B cell (primary cell): ENCODE measurements at regions of chr22 and their contacts with region 1.

Region 1: GRCh38 chr22:41285820-41286638 is at the start of gene RANGAP1:
- DNase-seq: peak; percentile 99
- ATAC-seq: peak; percentile 96
- H3K4me3 ChIP-seq: peak within 1 kb of the TSS; percentile 80 to 98 (median 88)
- H3K4me3 Mint-ChIP-seq: peak within 1 kb of the TSS; percentile 100
- H3K27ac ChIP-seq: peak within 1 kb of the TSS; percentile 94 to 95
- H3K27ac Mint-ChIP-seq: peak within 1 kb of the TSS; percentile 99
- H3K4me1 ChIP-seq: peaks cover 12 to 16% of the 10 kb centered on the region in 2 donors
- H3K4me1 Mint-ChIP-seq: peaks cover 26% of the 10 kb centered on the region
- H3K27me3 ChIP-seq: no peaks in the 10 kb centered on the region
- H3K27me3 Mint-ChIP-seq: no peaks in the 10 kb centered on the region
- CTCF ChIP-seq: no peak
- total RNA-seq, gene RANGAP1: 48.4 and 48.8 TPM in 2 replicates

Region 2: DNA sequence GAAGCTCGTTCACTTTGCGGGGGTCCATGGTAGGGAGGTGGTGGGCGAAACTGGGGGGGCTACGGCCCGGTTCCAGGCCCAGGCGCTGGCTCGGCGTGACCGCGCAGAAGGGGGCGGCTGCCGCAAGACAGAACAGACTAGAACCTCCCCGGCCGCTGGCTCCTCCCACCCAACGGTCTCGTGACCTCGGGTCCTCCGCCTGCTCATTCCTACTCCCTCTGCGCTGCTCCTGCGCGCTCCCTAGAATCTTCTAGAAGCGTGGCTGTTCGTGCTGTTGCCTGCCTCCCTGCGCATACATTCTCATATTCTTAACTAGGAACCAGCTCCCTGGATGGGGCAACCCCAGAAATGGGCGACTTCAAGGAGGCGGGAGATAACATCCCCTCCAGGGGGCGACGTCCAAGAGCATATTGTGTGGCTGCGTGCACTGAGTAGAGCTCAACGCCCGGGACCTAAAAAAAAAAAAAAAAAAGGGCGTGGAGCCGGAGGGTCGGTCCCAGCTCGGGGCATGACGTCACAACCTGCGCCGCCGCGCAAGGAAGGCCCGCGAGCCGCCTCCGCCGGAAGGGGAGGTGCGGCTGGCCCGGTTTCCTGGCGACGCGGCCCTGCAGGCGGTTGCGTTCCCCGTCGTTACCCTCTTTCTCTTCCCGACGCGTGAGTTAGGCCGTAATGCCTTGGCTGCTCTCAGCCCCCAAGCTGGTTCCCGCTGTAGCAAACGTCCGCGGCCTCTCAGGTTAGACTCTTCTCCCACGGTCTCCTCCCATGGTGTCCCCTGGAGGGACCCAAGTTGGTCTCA is 429.3 kb before region 1 on chr22 and contains the starts of genes ST13 and XPNPEP3:
- CTCF ChIA-PET with region 1: no interaction called
- POLR2A ChIA-PET with region 1: no interaction called
- intact Hi-C with region 1: loop called (anchors 1 kb)
- DNase-seq: peak; percentile 98
- ATAC-seq: peak; percentile 88
- H3K4me3 ChIP-seq: peak within 1 kb of the TSS; percentile 82 to 98 (median 94)
- H3K4me3 Mint-ChIP-seq: peak within 1 kb of the TSS; percentile 97
- H3K27ac ChIP-seq: peak within 1 kb of the TSS; percentile 91 to 94
- H3K27ac Mint-ChIP-seq: peak within 1 kb of the TSS; percentile 100
- H3K4me1 ChIP-seq: peaks cover 24 to 28% of the 10 kb centered on the region in 2 donors
- H3K4me1 Mint-ChIP-seq: peaks cover 46% of the 10 kb centered on the region
- H3K27me3 ChIP-seq: no peaks in the 10 kb centered on the region
- H3K27me3 Mint-ChIP-seq: no peaks in the 10 kb centered on the region
- CTCF ChIP-seq: peak; percentile 71
- total RNA-seq, gene ST13: 175 and 187 TPM in 2 replicates
- total RNA-seq, gene XPNPEP3: 18.9 and 24.2 TPM in 2 replicates

Region 3: DNA sequence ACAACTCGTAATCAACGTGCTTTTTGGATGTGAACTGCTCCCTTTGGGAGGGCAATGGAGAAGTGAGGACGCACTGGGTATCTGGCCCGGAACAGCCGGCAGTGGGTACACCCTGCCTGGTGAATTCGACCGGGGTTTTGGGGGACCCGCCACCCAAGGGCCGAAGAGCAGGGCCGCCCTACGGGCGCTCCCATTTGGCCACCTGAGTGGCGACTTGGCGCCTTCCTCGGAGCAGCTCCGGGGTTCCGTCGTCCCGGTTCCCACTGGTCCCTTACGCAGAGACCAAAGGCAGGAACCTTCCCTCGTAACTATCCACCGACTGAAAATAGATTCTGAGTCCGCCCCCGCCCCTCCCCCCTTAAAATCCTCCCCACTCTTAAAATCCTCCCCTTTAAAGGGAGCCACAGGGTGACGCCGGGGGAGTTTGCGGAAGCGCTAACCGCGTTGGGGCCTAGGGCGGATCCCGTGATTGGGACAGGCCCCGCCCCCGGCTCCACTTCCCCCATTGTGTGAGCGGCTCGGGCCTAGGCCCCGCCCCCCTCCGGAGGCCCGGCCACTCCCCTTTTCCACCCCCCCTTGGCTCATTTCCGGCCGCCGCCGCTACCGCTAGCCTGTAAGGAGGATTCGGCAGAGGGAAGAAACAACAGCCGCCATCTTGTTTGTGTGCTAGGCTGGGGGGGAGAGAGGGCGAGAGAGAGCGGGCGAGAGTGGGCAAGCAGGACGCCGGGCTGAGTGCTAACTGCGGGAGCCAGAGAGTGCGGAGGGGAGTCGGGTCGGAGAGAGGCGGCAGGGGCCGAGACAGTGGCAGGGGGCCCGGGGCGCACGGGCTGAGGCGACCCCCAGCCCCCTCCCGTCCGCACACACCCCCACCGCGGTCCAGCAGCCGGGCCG is 194.7 kb before region 1 on chr22:
- CTCF ChIA-PET with region 1: interaction called, 3 read pairs
- POLR2A ChIA-PET with region 1: no interaction called
- intact Hi-C with region 1: loop called (anchors 1 kb)
- DNase-seq: peak; percentile 99
- ATAC-seq: peak; percentile 81
- H3K4me3 ChIP-seq: peak overlapping the region; percentile 74 to 100 (median 92)
- H3K4me3 Mint-ChIP-seq: peak overlapping the region; percentile 98
- H3K27ac ChIP-seq: peak overlapping the region; percentile 97 to 99
- H3K27ac Mint-ChIP-seq: peak overlapping the region; percentile 100
- H3K4me1 ChIP-seq: peaks cover 25% of the 10 kb centered on the region in 2 donors
- H3K4me1 Mint-ChIP-seq: peaks cover 32% of the 10 kb centered on the region
- H3K27me3 ChIP-seq: no peaks in the 10 kb centered on the region
- H3K27me3 Mint-ChIP-seq: no peaks in the 10 kb centered on the region
- CTCF ChIP-seq: no peak

Region 4: GRCh38 chr22:41237707-41238569 is 48.1 kb before region 1 on chr22:
- CTCF ChIA-PET with region 1: interaction called, 16 read pairs
- POLR2A ChIA-PET with region 1: interaction called, 3 read pairs
- intact Hi-C with region 1: no loop called
- DNase-seq: peak; percentile 90
- ATAC-seq: peak; percentile 97
- H3K4me3 ChIP-seq: peak overlapping the region in 4 of 5 experiments; percentile 14 to 57 (median 41)
- H3K4me3 Mint-ChIP-seq: peak overlapping the region; percentile 84
- H3K27ac ChIP-seq: no peak overlapping the region
- H3K27ac Mint-ChIP-seq: no peak overlapping the region
- H3K4me1 ChIP-seq: peaks cover 5 to 10% of the 10 kb centered on the region in 2 donors
- H3K4me1 Mint-ChIP-seq: peaks cover 7% of the 10 kb centered on the region
- H3K27me3 ChIP-seq: no peaks in the 10 kb centered on the region
- H3K27me3 Mint-ChIP-seq: no peaks in the 10 kb centered on the region
- CTCF ChIP-seq: peak; percentile 77

Region 5: GRCh38 chr22:41256254-41256897 is 29.7 kb before region 1 on chr22:
- CTCF ChIA-PET with region 1: no interaction called
- POLR2A ChIA-PET with region 1: no interaction called
- intact Hi-C with region 1: no loop called
- DNase-seq: no peak
- ATAC-seq: no peak
- H3K4me3 ChIP-seq: no peak overlapping the region
- H3K4me3 Mint-ChIP-seq: no peak overlapping the region
- H3K27ac ChIP-seq: no peak overlapping the region
- H3K27ac Mint-ChIP-seq: no peak overlapping the region
- H3K4me1 ChIP-seq: no peaks in the 10 kb centered on the region
- H3K4me1 Mint-ChIP-seq: no peaks in the 10 kb centered on the region
- H3K27me3 ChIP-seq: no peaks in the 10 kb centered on the region
- H3K27me3 Mint-ChIP-seq: no peaks in the 10 kb centered on the region
- CTCF ChIP-seq: no peak

Region 6: DNA sequence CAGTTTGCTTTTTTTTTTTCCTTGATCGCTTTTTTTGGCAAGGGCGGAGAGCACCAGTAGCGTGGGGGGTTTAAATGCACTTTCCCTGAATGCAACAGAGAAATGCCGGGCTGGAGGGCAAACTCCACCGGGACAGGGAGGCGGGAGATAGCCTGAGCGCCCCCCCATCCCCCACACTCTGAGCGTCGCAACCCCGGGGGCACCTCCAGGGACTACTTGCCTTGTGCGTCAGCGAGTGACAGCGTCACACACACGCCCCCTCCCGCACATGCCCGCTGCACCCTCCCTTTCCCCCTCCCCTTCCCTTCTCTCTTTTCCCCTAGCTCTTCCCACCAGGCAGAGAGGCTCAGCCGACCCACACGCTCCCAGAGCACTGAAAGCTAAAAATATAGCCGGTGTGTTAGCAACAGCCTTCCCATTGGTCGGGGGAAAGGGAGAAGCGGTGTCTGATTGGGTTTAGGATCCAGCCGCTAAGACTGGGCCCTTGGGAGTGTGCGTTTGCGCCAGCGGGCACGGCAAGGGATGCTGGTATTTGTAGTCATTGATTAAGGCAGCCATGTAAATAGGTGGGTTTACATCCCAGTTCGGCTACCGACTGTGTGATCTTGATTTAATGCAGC is 162.3 kb after region 1 on chr22:
- CTCF ChIA-PET with region 1: no interaction called
- POLR2A ChIA-PET with region 1: no interaction called
- intact Hi-C with region 1: loop called (anchors 1 kb)
- DNase-seq: peak; percentile 96
- ATAC-seq: peak; percentile 60
- H3K4me3 ChIP-seq: peak overlapping the region; percentile 90 to 99 (median 97)
- H3K4me3 Mint-ChIP-seq: peak overlapping the region; percentile 99
- H3K27ac ChIP-seq: peak overlapping the region; percentile 97 to 98
- H3K27ac Mint-ChIP-seq: peak overlapping the region; percentile 94
- H3K4me1 ChIP-seq: peaks cover 8 to 25% of the 10 kb centered on the region in 2 donors
- H3K4me1 Mint-ChIP-seq: peaks cover 28% of the 10 kb centered on the region
- H3K27me3 ChIP-seq: no peaks in the 10 kb centered on the region
- H3K27me3 Mint-ChIP-seq: no peaks in the 10 kb centered on the region
- CTCF ChIP-seq: no peak

Region 7: DNA sequence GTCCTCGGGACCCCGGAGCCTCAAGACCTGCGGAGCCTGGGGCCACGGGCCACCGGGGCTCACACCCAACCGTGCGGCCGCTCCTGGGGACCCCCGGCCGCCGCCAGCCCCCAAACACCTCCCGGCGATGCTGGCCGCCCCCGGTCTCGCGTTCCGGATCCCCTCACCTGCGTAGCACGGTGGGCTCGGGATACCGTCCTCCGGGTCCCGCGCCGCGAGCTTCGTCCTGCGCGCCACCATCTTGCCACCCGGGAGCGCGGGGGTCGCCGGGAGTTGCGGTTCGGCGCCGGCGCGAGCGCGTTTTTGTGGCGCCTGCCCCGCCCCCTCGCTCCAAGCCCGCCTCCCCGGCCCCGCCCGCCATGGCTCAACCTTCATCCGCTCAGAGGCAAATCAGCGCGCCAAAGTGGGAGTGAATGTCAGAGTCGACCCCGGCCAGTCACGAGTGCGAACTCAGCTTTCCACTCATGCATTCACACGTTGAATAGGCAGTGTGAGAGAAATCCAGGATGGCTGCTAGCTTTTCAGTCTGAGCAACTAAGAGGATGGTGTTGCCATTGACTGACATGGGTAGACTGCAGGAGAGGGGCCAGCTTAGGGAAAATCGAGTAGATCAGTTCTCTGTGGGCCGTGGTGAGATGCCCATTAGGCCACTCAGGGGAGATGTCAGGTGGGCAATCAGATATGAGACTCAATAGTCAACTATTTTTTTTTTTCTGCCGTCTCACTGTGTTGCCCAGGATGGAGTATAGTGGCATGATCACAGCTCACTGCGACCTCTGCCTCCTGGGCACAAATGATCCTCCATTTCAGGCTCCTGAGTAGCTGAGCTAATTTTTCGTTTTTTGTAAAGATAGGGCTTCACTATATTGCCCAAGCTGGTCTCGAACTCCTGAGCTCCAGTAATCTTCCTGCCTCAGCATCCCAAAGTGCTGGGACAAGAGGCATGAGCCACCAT is 1296.0 kb after region 1 on chr22:
- CTCF ChIA-PET with region 1: no interaction called
- POLR2A ChIA-PET with region 1: no interaction called
- intact Hi-C with region 1: loop called (anchors 5 kb)
- DNase-seq: peak; percentile 87
- ATAC-seq: peak; percentile 91
- H3K4me3 ChIP-seq: peak overlapping the region in 4 of 5 experiments; percentile 58 to 78 (median 68)
- H3K4me3 Mint-ChIP-seq: peak overlapping the region; percentile 95
- H3K27ac ChIP-seq: peak overlapping the region; percentile 50 to 69
- H3K27ac Mint-ChIP-seq: peak overlapping the region; percentile 86
- H3K4me1 ChIP-seq: peaks cover 4 to 11% of the 10 kb centered on the region in 2 donors
- H3K4me1 Mint-ChIP-seq: peaks cover 12% of the 10 kb centered on the region
- H3K27me3 ChIP-seq: no peaks in the 10 kb centered on the region
- H3K27me3 Mint-ChIP-seq: no peaks in the 10 kb centered on the region
- CTCF ChIP-seq: no peak